ENCODE measurements at regions of chr9 and their contacts with region 1.

Region 1: DNA sequence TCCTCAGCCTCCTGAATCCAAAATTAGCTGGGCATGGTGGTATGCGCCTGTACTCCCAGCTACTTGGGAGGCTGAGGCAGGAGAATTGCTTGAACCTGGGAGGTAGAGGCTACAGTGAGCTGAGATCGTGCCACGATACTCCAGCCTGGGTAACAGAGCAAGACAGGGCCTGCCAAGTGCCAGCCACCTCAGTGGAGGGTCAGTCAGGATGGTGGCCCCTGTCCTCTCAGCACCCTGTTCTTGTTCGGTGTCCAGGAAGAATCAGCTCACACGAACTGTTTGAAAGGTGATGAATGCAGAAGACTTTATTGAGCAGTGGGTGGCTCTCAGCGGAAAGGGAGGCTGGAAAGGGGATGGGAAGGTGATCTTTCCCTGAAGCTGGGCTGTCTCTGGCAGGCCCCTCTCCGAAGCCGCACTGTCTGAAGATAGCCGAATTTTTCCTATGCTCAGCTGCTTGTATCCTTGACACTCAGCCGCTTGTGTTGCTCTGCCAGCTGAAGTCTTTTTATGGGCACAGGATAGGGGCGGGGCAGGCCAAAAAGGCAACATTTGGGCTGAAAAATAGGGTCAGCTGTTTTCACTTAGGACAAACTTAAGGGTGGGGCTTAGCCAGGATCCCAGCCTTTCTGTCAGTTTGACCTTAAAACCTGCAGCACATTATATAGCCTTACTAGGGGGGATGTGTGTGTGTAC is 50.9 kb downstream of the UBE2R2 start:
- DNase-seq: no peak
- H3K4me3 ChIP-seq: no peak overlapping the region
- H3K27ac ChIP-seq: no peak overlapping the region
- H3K4me1 ChIP-seq: no peaks in the 10 kb centered on the region
- H3K27me3 ChIP-seq: no peaks in the 10 kb centered on the region
- CTCF ChIP-seq: no peak

Region 2: DNA sequence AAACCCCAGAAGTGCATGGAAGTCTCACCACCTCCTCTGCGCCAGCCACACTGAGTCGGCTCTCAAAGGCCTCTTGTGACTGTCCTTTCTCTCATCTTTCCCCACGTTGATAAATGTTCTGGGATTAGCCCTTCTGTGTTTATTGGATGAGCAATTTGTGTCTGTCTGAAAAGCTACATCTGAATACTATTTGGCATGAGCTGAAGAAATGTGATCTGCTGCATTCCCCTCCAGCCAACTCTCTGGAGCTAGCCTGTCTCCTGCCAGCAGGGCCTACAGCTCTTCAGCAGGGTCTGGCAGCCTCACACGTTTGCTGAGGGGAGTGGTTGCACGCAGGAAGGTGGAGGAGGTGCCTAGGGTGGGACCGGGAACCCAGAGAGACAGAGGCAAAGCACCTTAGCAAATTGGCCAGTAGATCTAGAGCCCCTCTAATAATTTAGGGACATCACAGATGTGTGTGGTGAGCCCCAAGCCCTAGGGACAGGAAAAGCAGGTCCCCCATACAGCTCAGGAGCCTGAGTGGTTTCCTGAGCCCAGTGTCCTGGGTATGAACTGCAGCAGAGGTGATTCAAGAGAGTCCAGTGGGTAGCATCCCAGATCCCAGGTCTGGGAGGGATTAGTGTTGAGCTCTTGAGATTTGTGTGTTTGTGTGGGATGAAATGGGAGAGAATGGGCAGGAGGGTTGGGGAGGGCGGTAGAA is 680.2 kb before region 1 on chr9:
- CTCF ChIA-PET with region 1: no interaction called
- POLR2A ChIA-PET with region 1: no interaction called
- intact Hi-C with region 1: no loop called
- DNase-seq: no peak
- H3K4me3 ChIP-seq: no peak overlapping the region
- H3K27ac ChIP-seq: no peak overlapping the region
- H3K4me1 ChIP-seq: peaks cover 28% of the 10 kb centered on the region
- H3K27me3 ChIP-seq: no peaks in the 10 kb centered on the region
- CTCF ChIP-seq: no peak

Region 3: DNA sequence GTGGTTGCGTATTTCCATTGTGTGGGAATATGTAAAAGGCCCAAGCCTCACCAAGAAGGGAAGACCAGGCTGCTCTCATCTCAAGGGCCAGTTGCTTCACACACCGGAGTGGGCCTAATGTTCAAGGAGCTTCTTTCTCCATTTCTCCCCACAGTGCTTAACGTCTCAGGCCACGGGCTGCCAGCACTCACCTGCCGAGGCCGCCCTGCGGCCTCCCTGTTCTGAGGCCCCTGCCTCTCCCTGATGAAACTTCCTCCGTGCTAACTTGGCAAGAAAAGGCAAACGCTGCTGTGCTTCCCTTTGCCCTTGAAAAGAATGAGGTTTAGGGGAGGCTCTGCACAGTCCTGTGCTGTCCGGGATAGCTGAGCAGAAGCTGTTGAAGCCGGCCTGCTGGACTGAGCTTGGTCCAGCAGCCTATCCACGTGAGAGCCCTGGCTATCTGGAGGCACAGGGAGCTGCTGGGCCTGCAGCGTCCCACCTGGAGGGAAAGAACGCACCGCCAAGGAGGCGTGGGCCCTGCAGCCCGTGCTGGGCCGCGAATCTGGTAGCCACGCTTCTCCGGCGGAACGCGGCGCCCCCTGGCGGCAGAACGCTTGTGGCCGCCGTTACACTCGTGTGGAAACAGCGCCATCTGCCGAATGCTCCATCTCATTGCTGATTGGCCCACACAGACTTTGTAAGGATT is 146.1 kb before region 1 on chr9:
- CTCF ChIA-PET with region 1: no interaction called
- POLR2A ChIA-PET with region 1: no interaction called
- intact Hi-C with region 1: no loop called
- DNase-seq: peak; percentile 55 to 81
- H3K4me3 ChIP-seq: no peak overlapping the region
- H3K27ac ChIP-seq: no peak overlapping the region
- H3K4me1 ChIP-seq: no peaks in the 10 kb centered on the region; the same call in 1 of the 2 replicates
- H3K27me3 ChIP-seq: no peaks in the 10 kb centered on the region
- CTCF ChIP-seq: peak; percentile 93

Region 4: GRCh38 chr9:33778700-33779351 is 89.1 kb before region 1 on chr9:
- CTCF ChIA-PET with region 1: no interaction called
- POLR2A ChIA-PET with region 1: no interaction called
- intact Hi-C with region 1: no loop called
- DNase-seq: peak; percentile 44 to 60
- H3K4me3 ChIP-seq: peak overlapping the region; percentile 47
- H3K27ac ChIP-seq: peak overlapping the region; percentile 84
- H3K4me1 ChIP-seq: peaks cover 62% of the 10 kb centered on the region
- H3K27me3 ChIP-seq: no peaks in the 10 kb centered on the region
- CTCF ChIP-seq: peak; percentile 85

Region 5: DNA sequence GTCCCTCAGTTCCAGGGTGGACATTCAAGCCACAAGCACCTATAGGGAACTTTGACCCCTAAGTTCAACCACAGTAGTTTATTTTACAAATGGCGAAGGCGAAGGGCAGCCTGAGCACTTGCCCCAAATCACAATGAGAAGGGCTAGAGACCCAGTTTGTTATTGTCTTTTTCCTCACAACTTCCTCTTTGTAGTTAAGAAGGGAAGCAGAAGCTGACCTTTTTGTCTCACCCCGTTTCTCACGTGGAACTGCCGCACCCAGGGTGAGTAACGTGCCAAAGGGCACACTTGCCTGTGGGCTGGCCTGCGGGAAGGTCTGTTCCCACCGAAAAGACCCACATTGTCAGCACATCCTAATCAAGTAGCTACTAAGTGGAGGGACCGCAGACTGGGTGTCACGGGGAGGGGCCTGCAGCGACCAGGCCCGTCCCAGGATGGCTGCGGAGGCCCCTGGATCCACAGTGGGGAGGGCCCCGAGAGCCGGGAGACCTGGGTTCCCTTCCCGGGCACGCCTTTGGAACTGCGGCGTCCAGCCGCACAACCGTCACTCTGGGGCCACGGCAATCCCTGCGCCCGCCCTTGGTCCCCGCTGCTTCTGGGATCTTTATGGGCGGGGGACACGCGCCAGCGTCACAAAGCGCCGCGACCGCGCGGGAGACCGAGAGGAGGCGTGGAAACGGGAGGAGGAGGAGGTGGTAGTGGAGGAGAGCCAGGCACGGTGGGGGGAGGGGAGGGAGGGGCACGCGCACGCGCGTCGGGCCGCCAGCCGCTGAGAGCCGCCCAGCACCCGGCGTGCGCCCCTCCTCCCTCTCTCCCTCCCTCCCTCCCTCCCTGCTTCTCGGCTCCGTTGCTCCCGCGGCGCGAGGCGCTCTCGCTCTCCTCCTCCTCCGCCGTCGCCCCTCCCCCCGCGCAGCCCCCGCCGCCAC is 51.3 kb before region 1 on chr9 and contains the start of gene UBE2R2:
- CTCF ChIA-PET with region 1: no interaction called
- POLR2A ChIA-PET with region 1: no interaction called
- intact Hi-C with region 1: no loop called
- DNase-seq: peak; percentile 82 to 84
- H3K4me3 ChIP-seq: peak within 1 kb of the TSS; percentile 74
- H3K27ac ChIP-seq: peak within 1 kb of the TSS; percentile 96
- H3K4me1 ChIP-seq: peaks cover 39% of the 10 kb centered on the region
- H3K27me3 ChIP-seq: no peaks in the 10 kb centered on the region
- CTCF ChIP-seq: no peak
- total RNA-seq, gene UBE2R2: 37.5 and 38.9 TPM in 2 replicates

Region 6: DNA sequence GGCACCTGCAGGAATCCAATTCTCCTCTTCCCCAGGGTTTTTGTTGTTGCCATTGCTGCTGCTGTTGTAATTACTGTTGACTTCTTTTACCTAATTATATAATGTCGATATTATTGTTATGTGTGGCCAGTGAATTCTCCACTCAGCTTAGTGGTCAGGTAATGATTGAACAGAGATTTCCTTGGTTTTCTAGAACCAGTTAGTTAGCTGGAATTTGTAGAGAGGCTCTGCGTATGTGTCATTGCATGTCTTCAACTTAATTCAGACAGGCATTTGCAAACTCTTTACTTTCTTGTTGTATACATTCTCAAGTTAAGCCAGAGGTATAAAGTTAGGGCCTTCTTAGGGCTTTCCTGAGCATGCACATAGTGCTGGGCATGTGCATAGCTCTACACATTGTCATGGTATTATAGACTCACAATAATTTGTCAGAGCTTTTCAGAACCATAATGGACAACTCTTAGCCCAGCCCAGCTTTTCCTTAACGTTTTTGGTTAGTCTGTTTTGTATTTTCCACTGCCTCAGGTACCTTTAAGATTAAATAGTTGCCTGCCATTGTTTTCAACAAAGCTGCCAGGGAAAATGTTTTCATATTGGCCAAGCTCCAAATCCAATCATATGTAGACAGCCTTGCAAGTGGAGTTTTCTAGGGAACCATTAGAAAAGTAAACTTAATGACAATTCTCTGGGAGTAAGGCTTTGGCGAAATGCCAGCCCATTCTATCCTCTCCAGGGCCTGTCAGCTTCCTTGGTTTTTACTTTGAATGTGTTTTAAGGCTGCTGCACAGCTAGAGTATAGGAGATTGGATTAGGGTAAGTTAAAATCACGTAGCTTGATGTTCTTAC is 17.2 kb after region 1 on chr9:
- CTCF ChIA-PET with region 1: no interaction called
- POLR2A ChIA-PET with region 1: interaction called, 21 read pairs
- intact Hi-C with region 1: no loop called
- DNase-seq: peak in 1 of 2 experiments; percentile 2
- H3K4me3 ChIP-seq: no peak overlapping the region
- H3K27ac ChIP-seq: no peak overlapping the region
- H3K4me1 ChIP-seq: no peaks in the 10 kb centered on the region
- H3K27me3 ChIP-seq: no peaks in the 10 kb centered on the region
- CTCF ChIP-seq: no peak